HepG2 (cell line): ENCODE measurements at regions of chr10 and their contacts with region 1.

Region 1: GRCh38 chr10:91389636-91390512 is 20.3 kb upstream of the HECTD2 start:
- DNase-seq: peak; percentile 54
- ATAC-seq: peak; percentile 88
- H3K4me3 ChIP-seq: peak overlapping the region in 2 of 3 experiments; percentile 12 to 22; a peak in 2 of 6 replicates
- H3K27ac ChIP-seq: no peak overlapping the region
- H3K4me1 ChIP-seq: peaks cover 8% of the 10 kb centered on the region; the same call in 1 of the 2 replicates
- H3K27me3 ChIP-seq: peaks cover 0 to 9% of the 10 kb centered on the region in 2 experiments; a peak in 2 of 5 replicates
- CTCF ChIP-seq: peak; percentile 67
- EP300 ChIP-seq: no peak
- POLR2A ChIP-seq: no peak
- RAD21 ChIP-seq: 0 out of 2 replicates have a peak, but pooled peaks have one; percentile 26

Region 2: GRCh38 chr10:90885176-90885575 is 504.7 kb before region 1 on chr10:
- CTCF ChIA-PET with region 1: no interaction called
- POLR2A ChIA-PET with region 1: no interaction called
- in situ Hi-C with region 1: loop called (anchors 25 kb)
- intact Hi-C with region 1: no loop called
- DNase-seq: no peak
- ATAC-seq: no peak
- H3K4me3 ChIP-seq: no peak overlapping the region
- H3K27ac ChIP-seq: no peak overlapping the region
- H3K4me1 ChIP-seq: no peaks in the 10 kb centered on the region
- H3K27me3 ChIP-seq: no peaks in the 10 kb centered on the region
- CTCF ChIP-seq: no peak
- EP300 ChIP-seq: no peak
- POLR2A ChIP-seq: no peak
- RAD21 ChIP-seq: no peak

Region 3: DNA sequence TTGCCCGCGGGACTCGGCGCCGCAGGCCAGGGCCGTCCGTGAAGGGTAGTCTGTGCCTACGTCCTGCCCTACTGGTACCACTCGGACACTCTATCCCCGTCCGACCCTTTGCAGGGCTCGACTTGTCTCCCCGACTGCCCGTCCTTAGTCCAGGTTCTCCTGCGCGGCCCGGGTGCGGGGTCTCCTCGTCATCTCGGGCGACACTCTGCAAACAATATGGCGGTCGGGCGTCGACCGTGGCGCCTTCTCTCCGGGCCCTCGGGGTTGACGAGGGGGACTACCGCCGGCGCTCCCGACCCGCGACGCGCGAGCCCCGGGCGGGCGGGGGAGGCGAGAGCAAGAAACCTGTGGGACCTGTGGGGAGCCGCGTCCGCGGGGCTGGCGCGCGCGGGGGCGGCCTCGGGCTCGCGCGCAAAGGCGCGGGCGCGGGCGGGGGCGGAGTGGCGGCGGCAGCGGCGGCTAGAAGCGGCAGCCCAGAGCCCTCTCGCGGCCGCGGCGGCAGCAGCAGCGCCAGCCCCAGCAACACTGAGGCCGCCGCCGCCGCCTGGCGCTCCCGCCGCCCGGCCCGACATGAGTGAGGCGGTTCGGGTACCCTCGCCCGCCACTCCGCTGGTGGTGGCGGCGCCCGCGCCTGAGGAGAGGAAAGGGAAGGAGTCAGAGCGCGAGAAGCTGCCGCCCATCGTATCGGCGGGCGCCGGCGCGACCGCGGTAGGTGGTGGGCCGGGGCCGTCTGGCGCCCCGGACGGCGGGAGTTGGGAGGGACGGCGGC is 20.2 kb after region 1 on chr10 and contains the start of gene HECTD2:
- CTCF ChIA-PET with region 1: interaction called, 13 read pairs
- POLR2A ChIA-PET with region 1: no interaction called
- in situ Hi-C with region 1: no loop called
- intact Hi-C with region 1: no loop called
- DNase-seq: peak; percentile 49
- ATAC-seq: peak; percentile 87
- H3K4me3 ChIP-seq: peak within 1 kb of the TSS; percentile 68 to 99 (median 74)
- H3K27ac ChIP-seq: peak within 1 kb of the TSS; percentile 97
- H3K4me1 ChIP-seq: peaks cover 25% of the 10 kb centered on the region
- H3K27me3 ChIP-seq: peaks cover 2 to 7% of the 10 kb centered on the region in 2 experiments; a peak in 2 of 5 replicates
- CTCF ChIP-seq: peak; percentile 46; the same call in 1 of the 2 replicates
- EP300 ChIP-seq: no peak
- POLR2A ChIP-seq: peak; percentile 67 to 85
- RAD21 ChIP-seq: peak; percentile 64
- total RNA-seq, gene HECTD2: 5.1 and 5.2 TPM in 2 replicates

Region 4: DNA sequence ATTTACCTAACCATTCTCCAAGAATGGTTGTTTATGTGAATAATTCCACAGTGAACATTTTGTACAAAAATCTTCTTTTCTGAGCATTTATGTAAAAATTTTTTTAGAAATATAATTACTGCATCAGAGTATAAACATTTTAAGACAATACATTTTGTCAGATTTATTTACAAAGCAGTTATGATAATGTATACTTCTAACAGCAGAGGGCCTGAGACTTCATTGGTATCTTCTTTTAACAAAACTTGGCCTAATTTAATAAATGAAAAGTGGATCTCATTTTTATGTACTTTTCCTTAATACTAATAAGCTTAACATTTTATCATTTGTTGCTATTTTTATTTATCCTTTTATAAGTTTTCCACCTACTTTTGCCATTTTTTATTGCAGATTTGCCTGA is 89.7 kb after region 1 on chr10:
- CTCF ChIA-PET with region 1: no interaction called
- POLR2A ChIA-PET with region 1: no interaction called
- in situ Hi-C with region 1: no loop called
- intact Hi-C with region 1: no loop called
- DNase-seq: no peak
- ATAC-seq: no peak
- H3K4me3 ChIP-seq: no peak overlapping the region
- H3K27ac ChIP-seq: no peak overlapping the region
- H3K4me1 ChIP-seq: no peaks in the 10 kb centered on the region
- H3K27me3 ChIP-seq: no peaks in the 10 kb centered on the region
- CTCF ChIP-seq: no peak
- EP300 ChIP-seq: no peak
- POLR2A ChIP-seq: no peak
- RAD21 ChIP-seq: no peak

Region 5: GRCh38 chr10:91694170-91694794 is 304.4 kb after region 1 on chr10:
- CTCF ChIA-PET with region 1: interaction called, 6 read pairs
- POLR2A ChIA-PET with region 1: no interaction called
- in situ Hi-C with region 1: no loop called
- intact Hi-C with region 1: loop called (anchors 2 kb)
- DNase-seq: peak; percentile 38
- ATAC-seq: peak; percentile 50; the same call in 2 of the 3 replicates
- H3K4me3 ChIP-seq: no peak overlapping the region
- H3K27ac ChIP-seq: no peak overlapping the region
- H3K4me1 ChIP-seq: no peaks in the 10 kb centered on the region
- H3K27me3 ChIP-seq: no peaks in the 10 kb centered on the region
- CTCF ChIP-seq: peak; percentile 76
- EP300 ChIP-seq: no peak
- POLR2A ChIP-seq: no peak
- RAD21 ChIP-seq: no peak